ENCODE measurements at regions of chr10 and their contacts with region 1.

Region 1: GRCh38 chr10:23362879-23363792 is 18.5 kb upstream of the C10orf67 start:
- DNase-seq: no peak
- ATAC-seq: no peak
- H3K4me3 ChIP-seq: no peak overlapping the region
- H3K27ac ChIP-seq: no peak overlapping the region
- H3K4me1 ChIP-seq: no peaks in the 10 kb centered on the region
- H3K27me3 ChIP-seq: no peaks in the 10 kb centered on the region
- CTCF ChIP-seq: no peak
- POLR2A ChIP-seq: no peak
- RAD21 ChIP-seq: no peak

Region 2: GRCh38 chr10:23433701-23434100 is 70.6 kb after region 1 on chr10:
- CTCF ChIA-PET with region 1: no interaction called
- POLR2A ChIA-PET with region 1: no interaction called
- RAD21 ChIA-PET with region 1: no interaction called
- intact Hi-C with region 1: loop called (anchors 2 kb)
- DNase-seq: no peak
- ATAC-seq: no peak
- H3K4me3 ChIP-seq: no peak overlapping the region
- H3K27ac ChIP-seq: no peak overlapping the region
- H3K4me1 ChIP-seq: peaks cover 0 to 6% of the 10 kb centered on the region in 2 experiments; a peak in 3 of 4 replicates
- H3K27me3 ChIP-seq: no peaks in the 10 kb centered on the region
- CTCF ChIP-seq: no peak
- POLR2A ChIP-seq: no peak
- RAD21 ChIP-seq: no peak

Region 3: GRCh38 chr10:23493711-23494110 is 130.6 kb after region 1 on chr10:
- CTCF ChIA-PET with region 1: no interaction called
- POLR2A ChIA-PET with region 1: no interaction called
- RAD21 ChIA-PET with region 1: no interaction called
- intact Hi-C with region 1: no loop called
- DNase-seq: no peak
- ATAC-seq: no peak
- H3K4me3 ChIP-seq: no peak overlapping the region
- H3K27ac ChIP-seq: no peak overlapping the region
- H3K4me1 ChIP-seq: no peaks in the 10 kb centered on the region
- H3K27me3 ChIP-seq: peaks cover 25% of the 10 kb centered on the region; the same call in 1 of the 2 replicates
- CTCF ChIP-seq: no peak
- POLR2A ChIP-seq: no peak
- RAD21 ChIP-seq: no peak